Naive thymus-derived CD8-positive, alpha-beta T cell (primary cell): ENCODE measurements at regions of chr4 and their contacts with region 1.

Region 1: GRCh38 chr4:1604711-1605205 is 79.4 kb downstream of the FAM53A start:
- DNase-seq: peak in 7 of 10 donors; percentile 11 to 89 (median 61)
- ATAC-seq: peak; percentile 59 to 88
- H3K4me3 Mint-ChIP-seq: peak overlapping the region in 9 of 10 donors; percentile 15 to 86 (median 77)
- H3K27ac Mint-ChIP-seq: peak overlapping the region in 9 of 10 donors; percentile 53 to 95 (median 92)
- H3K4me1 Mint-ChIP-seq: peaks cover 3 to 36% (median 20%) of the 10 kb centered on the region in 4 donors
- H3K27me3 Mint-ChIP-seq: peaks cover 0 to 10% (median 0%) of the 10 kb centered on the region in 5 donors

Region 2: DNA sequence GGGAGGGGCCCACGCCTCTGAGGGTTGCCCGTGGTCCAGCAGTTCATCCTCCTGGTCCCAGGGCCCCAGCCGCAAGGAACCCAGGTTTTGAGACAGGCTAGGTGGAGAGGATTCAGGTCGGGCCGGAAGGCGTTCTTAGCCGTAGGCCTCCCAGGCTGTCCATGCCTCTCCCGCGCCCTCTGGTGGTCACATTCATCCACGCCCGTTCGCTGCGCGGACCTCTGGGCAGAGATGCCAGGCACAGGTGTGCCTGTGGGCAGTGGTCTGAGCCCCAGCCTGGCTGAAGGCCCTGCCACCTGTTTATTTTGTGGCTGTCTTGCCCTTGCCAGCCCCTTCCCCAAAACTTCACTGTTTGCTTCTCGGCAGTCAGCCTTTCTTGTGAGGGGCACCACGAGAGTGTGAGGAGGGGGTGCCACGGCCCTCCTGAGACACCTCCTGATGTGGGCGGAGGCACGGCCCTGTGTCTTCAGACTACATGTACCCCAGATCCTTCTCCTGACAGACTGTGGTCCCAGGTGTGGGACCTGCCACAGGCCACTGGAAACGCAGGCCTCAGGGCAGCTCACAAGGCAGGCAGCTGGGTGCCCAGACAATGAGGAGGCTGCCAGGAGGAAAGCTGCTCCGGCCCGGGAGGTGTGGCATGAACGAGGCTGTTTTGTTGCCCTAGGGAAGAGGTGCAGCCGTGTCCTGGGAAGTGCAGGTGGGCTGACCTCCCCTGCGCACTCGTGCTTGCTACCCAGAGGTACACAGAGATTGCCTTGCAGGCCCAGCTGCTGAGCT is 252.7 kb before region 1 on chr4:
- POLR2A ChIA-PET with region 1: interaction called, 21 read pairs
- DNase-seq: peak; percentile 72 to 93 (median 86)
- ATAC-seq: peak; percentile 32 to 44
- H3K4me3 Mint-ChIP-seq: peak overlapping the region in 3 of 10 donors; percentile 8 to 62 (median 58)
- H3K27ac Mint-ChIP-seq: peak overlapping the region; percentile 70 to 93 (median 87)
- H3K4me1 Mint-ChIP-seq: peaks cover 9 to 41% (median 25%) of the 10 kb centered on the region in 4 donors
- H3K27me3 Mint-ChIP-seq: no peaks in the 10 kb centered on the region

Region 3: DNA sequence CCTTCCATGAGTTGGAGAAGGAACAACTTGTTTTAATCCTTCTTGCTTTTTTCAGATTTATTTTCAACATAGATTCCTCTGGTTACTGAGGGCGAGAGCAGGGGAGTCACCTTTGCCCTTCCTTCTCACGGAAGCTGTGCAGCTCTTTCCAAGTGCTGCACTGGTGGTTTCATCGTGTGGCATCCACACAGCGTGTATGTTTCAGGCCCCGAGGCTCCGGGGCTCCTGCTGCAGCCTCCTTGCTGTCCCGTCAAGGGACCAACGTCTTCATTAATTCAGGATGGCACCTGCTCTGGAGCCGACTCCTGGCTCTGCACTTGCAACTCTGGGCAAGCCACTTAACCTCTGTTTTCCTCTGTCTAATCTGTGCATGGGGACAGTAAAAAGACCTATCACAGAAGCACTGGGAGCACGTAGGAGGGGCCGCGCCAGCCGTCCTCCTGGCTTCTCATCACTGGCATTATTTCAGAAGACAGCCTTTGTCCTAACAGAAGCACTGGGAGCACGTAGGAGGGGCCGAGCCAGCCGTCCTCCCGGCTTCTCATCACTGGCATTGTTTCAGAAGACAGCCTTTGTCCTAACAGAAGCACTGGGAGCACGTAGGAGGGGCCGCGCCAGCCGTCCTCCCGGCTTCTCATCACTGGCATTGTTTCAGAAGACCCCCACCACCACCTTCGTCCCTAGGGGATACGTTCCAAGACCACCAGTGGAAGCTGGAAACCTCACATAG is 80.7 kb before region 1 on chr4:
- POLR2A ChIA-PET with region 1: no interaction called
- DNase-seq: no peak
- ATAC-seq: no peak
- H3K4me3 Mint-ChIP-seq: peak overlapping the region in 1 of 10 donors; percentile 48
- H3K27ac Mint-ChIP-seq: peak overlapping the region in 1 of 10 donors; percentile 43
- H3K4me1 Mint-ChIP-seq: peaks cover 0 to 5% (median 2%) of the 10 kb centered on the region in 4 donors
- H3K27me3 Mint-ChIP-seq: peaks cover 11 to 65% (median 22%) of the 10 kb centered on the region in 5 donors

Region 4: GRCh38 chr4:1579901-1580691 is 24.7 kb before region 1 on chr4:
- POLR2A ChIA-PET with region 1: interaction called, 57 read pairs
- DNase-seq: peak; percentile 81 to 97 (median 93)
- ATAC-seq: peak; percentile 54 to 77
- H3K4me3 Mint-ChIP-seq: peak overlapping the region; percentile 61 to 85 (median 82)
- H3K27ac Mint-ChIP-seq: peak overlapping the region in 9 of 10 donors; percentile 4 to 88 (median 68)
- H3K4me1 Mint-ChIP-seq: peaks cover 3 to 12% (median 8%) of the 10 kb centered on the region in 4 donors
- H3K27me3 Mint-ChIP-seq: no peaks in the 10 kb centered on the region

Region 5: GRCh38 chr4:1614854-1615634 is 10.3 kb after region 1 on chr4:
- POLR2A ChIA-PET with region 1: interaction called, 16 read pairs
- DNase-seq: peak in 4 of 10 donors; percentile 29 to 78 (median 50)
- ATAC-seq: peak; percentile 6 to 56
- H3K4me3 Mint-ChIP-seq: peak overlapping the region in 9 of 10 donors; percentile 2 to 77 (median 65)
- H3K27ac Mint-ChIP-seq: peak overlapping the region; percentile 80 to 92 (median 87)
- H3K4me1 Mint-ChIP-seq: peaks cover 13 to 38% (median 23%) of the 10 kb centered on the region in 4 donors
- H3K27me3 Mint-ChIP-seq: no peaks in the 10 kb centered on the region

Region 6: DNA sequence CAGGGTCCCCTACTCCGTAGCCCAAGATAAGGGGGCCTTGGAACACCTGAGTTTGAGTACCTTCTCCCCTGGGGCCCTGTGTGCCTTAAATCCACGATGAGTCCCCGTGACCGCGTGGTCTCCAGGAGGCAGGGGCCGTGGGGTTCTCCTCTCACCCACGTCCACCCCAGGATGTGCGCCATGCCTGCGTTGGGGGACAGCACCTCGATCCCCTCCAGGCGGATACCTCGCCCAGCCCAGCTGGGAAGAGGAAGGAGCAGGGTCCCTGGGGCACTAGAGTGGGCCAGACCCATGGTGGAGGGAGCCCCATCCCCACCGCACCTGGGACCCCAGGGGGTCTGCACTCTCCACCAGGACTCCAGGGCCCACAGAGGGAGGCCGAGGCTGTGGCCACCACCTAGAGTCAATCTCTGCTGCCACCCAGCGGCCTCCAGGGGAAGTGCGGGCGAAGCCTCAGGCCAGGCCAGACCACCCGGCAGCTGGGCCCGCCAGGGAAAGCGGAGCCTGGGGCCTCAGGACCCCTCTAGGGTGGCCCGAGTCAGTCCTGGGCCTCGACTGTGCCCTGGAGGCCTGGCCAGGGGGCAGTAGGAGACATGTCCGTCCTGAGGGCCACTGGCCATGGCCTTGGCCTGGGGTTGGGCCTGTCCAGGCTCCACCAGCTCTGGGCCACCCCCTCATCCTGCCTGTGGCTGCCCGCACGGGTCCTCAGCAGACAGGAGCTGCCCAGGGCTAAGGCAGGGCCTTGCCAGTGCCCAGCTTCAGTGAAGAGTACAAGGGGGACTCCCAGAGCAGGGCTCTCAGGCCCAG is 24.3 kb after region 1 on chr4:
- POLR2A ChIA-PET with region 1: interaction called, 11 read pairs
- DNase-seq: peak; percentile 37 to 82 (median 66)
- ATAC-seq: peak; percentile 64 to 95
- H3K4me3 Mint-ChIP-seq: no peak overlapping the region
- H3K27ac Mint-ChIP-seq: peak overlapping the region in 1 of 10 donors; percentile 49
- H3K4me1 Mint-ChIP-seq: peaks cover 0 to 2% (median 0%) of the 10 kb centered on the region in 4 donors
- H3K27me3 Mint-ChIP-seq: peaks cover 0 to 10% (median 2%) of the 10 kb centered on the region in 5 donors

Region 7: DNA sequence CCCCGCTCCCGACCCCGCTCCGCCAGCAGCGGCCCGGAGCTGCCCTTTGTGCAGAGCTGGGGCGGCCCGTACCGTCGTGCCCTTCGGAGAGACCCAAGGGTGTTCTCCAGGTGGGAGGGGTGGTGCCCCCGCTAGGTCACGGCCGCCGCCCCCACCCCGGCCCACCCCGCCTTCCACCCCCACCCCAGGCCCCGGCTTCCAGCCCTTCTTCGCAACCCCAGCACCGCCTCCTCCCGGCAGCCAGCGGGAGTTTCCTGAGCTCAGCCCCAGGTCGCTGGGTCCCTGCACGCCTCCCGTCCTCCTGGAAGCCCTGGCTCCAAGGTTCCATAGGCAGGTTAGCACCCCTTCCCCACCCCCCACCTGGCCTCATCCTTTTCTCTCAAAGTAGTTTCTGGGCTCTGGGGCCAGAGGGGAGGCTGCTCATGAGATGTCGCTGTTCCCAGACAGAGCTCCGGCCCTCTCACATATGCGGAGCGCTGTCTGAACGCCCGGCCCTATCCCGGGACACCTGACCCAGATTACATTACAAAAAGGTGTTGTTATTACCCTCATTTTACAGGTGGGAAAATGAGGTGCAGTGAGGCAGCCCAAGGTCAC is 163.1 kb after region 1 on chr4:
- POLR2A ChIA-PET with region 1: no interaction called
- DNase-seq: peak in 1 of 10 donors; percentile 12
- ATAC-seq: peak; percentile 54
- H3K4me3 Mint-ChIP-seq: peak overlapping the region; percentile 39 to 84 (median 58)
- H3K27ac Mint-ChIP-seq: no peak overlapping the region
- H3K4me1 Mint-ChIP-seq: peaks cover 2 to 22% (median 8%) of the 10 kb centered on the region in 4 donors
- H3K27me3 Mint-ChIP-seq: peaks cover 2 to 34% (median 8%) of the 10 kb centered on the region in 5 donors